Gastrocnemius medialis (tissue), 4 donors: ENCODE measurements at regions of chr3 and their contacts with region 1.

Region 1: GRCh38 chr3:108489771-108490170 is 20.6 kb downstream of the MYH15 start:
- DNase-seq: no peak
- ATAC-seq: peak; percentile 37 to 54
- H3K4me3 ChIP-seq: no peak overlapping the region
- H3K27ac ChIP-seq: no peak overlapping the region
- H3K4me1 ChIP-seq: peaks cover 13 to 14% of the 10 kb centered on the region in 2 donors
- H3K27me3 ChIP-seq: no peaks in the 10 kb centered on the region
- CTCF ChIP-seq: peak; percentile 59 to 74 (median 72)
- POLR2A ChIP-seq: no peak

Region 2: DNA sequence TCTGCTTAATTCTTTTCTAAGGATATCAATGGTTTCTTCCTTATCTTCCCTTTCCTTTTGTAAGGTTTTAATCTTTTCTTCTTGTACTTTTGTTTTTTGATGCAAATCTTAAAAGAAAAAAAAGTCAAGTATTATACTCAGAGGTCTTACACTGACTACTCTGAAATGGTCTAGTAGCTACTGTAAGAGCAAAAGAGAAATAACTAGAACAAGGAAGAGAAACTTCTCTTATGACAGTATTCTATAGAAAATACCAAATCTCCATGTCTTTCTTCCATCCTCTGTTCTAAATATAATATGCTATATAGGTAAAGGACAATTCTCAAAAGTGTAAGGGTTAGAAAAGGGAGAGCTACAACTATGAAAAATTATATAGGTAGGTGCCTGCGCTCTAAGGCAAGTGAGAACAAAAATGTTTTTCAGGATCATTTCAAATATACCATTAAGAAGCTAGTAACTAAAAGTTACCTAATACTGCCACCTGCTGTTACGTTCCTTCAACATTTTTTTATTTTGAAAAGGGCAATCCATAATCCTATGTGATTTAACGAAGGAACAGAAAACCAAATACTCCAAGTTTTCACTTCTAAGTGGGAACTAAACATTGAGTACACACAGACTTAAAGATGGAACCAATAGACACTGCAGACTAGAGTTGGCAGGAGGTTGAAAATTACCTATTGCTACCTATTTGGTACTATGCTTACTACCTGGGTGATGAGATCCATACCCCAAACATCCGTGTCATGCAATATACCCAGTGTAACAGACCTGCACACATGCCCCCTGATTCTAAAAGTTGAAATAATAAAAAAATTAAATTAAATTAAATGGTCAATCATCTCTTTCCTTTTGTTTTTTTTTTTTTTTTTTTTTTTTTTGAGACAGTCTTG is 62.7 kb after region 1 on chr3:
- in situ Hi-C with region 1: loop called in 3 of 4 experiments (anchors 5 to 10 kb)
- intact Hi-C with region 1: loop called (anchors 1 kb)
- DNase-seq: no peak
- ATAC-seq: peak in 1 of 2 donors; percentile 60
- H3K4me3 ChIP-seq: no peak overlapping the region
- H3K27ac ChIP-seq: no peak overlapping the region
- H3K4me1 ChIP-seq: no peaks in the 10 kb centered on the region
- H3K27me3 ChIP-seq: no peaks in the 10 kb centered on the region
- CTCF ChIP-seq: peak; percentile 36 to 56 (median 44)
- POLR2A ChIP-seq: no peak